Sigmoid colon (tissue), 7 donors: ENCODE measurements at regions of chr6 and their contacts with region 1.

Region 1: GRCh38 chr6:113825781-113826180 is 31.4 kb upstream of the MARCKS start:
- DNase-seq: peak; percentile 94
- H3K4me3 ChIP-seq: no peak overlapping the region
- H3K27ac ChIP-seq: peak overlapping the region in 3 of 4 donors; percentile 72 to 79 (median 75)
- H3K4me1 ChIP-seq: peaks cover 0 to 37% (median 33%) of the 10 kb centered on the region in 4 donors
- H3K27me3 ChIP-seq: no peaks in the 10 kb centered on the region
- CTCF ChIP-seq: no peak
- EP300 ChIP-seq: no peak
- POLR2A ChIP-seq: no peak

Region 2: DNA sequence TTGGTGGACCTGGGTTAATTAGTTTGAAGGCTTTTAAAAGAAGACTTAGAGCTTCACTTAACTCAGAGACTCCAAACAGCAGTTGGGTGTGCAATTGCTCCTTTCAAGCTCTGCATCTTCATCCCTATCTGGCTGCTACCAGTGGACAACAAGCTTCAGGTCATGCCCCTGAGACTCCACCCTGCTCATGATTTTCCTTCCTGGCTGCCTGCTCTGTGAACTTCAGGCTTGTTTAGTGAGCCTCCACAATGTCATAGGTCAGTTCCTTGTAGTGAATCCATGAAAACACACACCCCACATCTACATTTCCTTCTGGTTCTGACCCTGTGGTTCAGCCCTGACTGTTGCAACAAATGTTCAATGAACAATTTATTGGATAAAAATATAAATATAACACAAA is 29.7 kb before region 1 on chr6:
- intact Hi-C with region 1: no loop called
- DNase-seq: no peak
- H3K4me3 ChIP-seq: no peak overlapping the region
- H3K27ac ChIP-seq: no peak overlapping the region
- H3K4me1 ChIP-seq: no peaks in the 10 kb centered on the region
- H3K27me3 ChIP-seq: no peaks in the 10 kb centered on the region
- CTCF ChIP-seq: no peak
- EP300 ChIP-seq: no peak
- POLR2A ChIP-seq: no peak

Region 3: GRCh38 chr6:113842153-113842552 is 16.4 kb after region 1 on chr6:
- intact Hi-C with region 1: loop called (anchors 2 kb)
- DNase-seq: no peak
- H3K4me3 ChIP-seq: no peak overlapping the region
- H3K27ac ChIP-seq: no peak overlapping the region
- H3K4me1 ChIP-seq: peaks cover 0 to 9% (median 4%) of the 10 kb centered on the region in 4 donors
- H3K27me3 ChIP-seq: no peaks in the 10 kb centered on the region
- CTCF ChIP-seq: no peak
- EP300 ChIP-seq: no peak
- POLR2A ChIP-seq: no peak